Activated CD4-positive, alpha-beta T cell treated with anti-CD3 and anti-CD28 coated beads for 36 hours (primary cell): ENCODE measurements at regions of chr19 and their contacts with region 1.

Region 1: DNA sequence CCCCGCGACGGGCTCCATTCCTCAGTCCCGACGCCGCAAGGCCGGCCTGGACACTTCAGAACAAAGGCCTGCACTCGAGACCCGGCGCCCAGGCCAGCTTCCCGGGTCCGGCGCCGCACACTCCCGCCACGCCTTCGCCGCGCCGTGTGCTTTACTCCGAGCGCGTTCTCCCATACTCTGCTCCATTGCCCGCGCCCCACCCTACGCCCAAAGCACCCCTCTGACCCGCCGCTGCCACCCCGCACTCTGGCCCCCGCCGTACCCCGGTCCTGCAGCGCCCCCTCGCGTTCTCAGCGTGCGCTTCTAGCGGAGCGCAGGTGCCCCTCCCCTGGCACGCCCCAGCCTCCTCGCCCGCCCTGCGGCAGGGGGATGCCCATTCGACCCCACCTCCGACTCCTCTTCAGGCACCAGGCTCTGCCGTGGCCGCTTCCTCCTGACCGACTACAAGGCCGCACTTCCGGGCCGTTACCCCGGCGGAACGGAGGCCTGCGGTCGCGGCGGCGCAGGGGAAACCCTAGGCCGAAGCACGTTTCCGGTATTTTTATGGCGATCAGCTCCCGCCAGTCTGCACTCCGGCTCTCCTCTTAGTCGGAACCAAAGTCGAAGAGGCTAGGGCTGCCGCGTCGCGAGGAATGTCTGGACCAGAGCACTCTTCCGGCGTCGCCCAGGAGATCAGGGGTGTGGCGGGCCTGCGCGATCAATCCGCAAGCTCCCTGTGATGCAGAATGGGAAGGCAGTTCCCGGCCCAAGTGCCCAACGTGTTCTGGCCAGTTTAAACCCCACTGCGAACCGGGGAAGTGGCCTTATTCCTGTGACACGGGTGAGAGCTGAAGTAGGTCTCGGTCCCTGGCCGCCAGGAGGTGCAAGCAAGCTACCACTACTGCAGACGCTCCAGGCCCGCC is at the start of gene ZBTB45:
- DNase-seq: peak; percentile 96
- ATAC-seq: peak; percentile 82
- H3K4me3 Mint-ChIP-seq: peak within 1 kb of the TSS; percentile 82
- H3K27ac Mint-ChIP-seq: peak within 1 kb of the TSS; percentile 94
- H3K4me1 Mint-ChIP-seq: peaks cover 39% of the 10 kb centered on the region
- H3K27me3 Mint-ChIP-seq: no peaks in the 10 kb centered on the region
- total RNA-seq, gene ZBTB45: 10.1 to 11.1 TPM

Region 2: DNA sequence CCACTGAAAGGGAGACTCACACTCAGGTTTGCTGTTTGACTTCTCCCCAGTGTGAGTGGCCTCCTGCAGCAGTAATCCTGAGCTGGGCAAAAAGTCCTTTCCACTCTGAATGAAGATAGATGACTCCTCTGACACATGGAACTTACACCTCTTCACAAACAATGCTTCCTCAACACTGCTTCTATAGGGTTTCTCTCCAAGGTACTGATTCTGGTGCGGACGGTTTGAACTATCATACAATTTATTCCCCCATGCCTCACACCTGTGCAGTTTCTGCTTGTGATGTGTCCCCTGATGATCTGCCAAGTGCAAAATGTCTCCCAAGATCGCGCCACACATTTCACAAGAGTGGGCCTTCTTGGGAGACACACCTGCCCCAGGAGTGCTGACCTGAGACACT is 592.0 kb before region 1 on chr19:
- CTCF ChIA-PET with region 1: no interaction called
- POLR2A ChIA-PET with region 1: no interaction called
- intact Hi-C with region 1: no loop called
- DNase-seq: no peak
- ATAC-seq: no peak
- H3K4me3 Mint-ChIP-seq: no peak overlapping the region
- H3K27ac Mint-ChIP-seq: no peak overlapping the region
- H3K4me1 Mint-ChIP-seq: no peaks in the 10 kb centered on the region
- H3K27me3 Mint-ChIP-seq: no peaks in the 10 kb centered on the region

Region 3: DNA sequence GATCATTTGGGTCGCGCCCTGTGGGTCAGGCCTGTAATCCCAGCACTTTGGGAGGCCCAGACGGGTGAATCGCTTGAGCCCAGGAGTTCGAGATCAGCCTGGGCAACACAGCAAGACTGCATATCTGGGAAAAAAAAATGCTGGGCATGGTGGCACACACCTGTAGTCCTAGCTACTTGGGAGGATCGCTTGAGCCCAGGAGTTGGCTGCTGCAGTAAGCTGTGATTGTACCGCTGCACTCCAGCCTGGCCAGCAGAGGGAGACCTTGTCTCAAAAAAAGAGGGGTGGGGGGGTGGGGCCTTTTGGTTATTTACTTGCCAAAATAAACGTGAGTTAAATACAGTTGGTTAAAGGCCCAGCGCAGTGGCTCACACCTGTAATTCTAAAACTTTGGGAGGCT is 300.7 kb before region 1 on chr19:
- CTCF ChIA-PET with region 1: no interaction called
- POLR2A ChIA-PET with region 1: no interaction called
- intact Hi-C with region 1: loop called in 1 of 2 experiments (anchors 1 kb)
- DNase-seq: peak; percentile 70
- ATAC-seq: peak; percentile 88
- H3K4me3 Mint-ChIP-seq: no peak overlapping the region
- H3K27ac Mint-ChIP-seq: no peak overlapping the region
- H3K4me1 Mint-ChIP-seq: no peaks in the 10 kb centered on the region
- H3K27me3 Mint-ChIP-seq: no peaks in the 10 kb centered on the region

Region 4: DNA sequence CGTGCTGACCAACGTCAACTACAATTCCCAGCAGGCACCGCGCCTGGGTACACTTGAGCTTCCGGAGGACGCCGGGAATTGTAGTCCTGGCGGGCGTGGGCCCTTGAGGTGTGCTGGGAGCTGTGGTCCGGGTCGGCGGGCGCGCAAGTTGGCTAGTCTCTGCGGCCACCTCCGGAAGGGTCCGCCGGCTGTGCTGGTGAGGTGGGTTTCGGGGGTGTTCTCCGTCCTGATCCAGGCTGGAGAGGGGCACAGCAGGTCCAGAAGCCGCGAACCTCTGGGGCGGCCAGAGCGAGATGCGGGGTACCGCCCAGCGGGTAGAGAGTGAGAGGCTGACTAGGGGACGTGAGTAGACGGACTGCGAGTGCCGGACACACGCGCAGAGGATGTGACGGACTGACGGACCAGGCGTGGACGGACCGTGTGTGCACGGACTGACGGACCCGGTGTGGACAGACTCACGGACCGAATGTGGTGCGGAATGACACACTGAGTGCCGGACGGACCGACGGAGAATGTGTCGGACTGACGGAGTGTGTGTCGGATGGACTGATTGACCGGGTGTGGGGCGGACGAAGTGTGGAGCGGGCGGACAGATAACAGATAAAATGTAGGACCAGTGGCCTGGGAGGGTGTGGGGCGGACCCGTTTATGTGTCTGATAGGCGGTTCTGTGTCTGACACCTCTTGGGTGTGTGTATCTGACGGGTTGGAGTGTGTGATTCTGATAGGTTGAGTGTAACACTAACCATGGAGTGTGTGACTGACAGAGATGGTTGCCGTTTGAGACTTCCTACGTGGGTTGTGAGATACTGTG is 192.5 kb before region 1 on chr19 and contains the start of gene ZSCAN22:
- CTCF ChIA-PET with region 1: no interaction called
- POLR2A ChIA-PET with region 1: interaction called, 6 read pairs
- intact Hi-C with region 1: loop called in 1 of 2 experiments (anchors 1 kb)
- DNase-seq: peak; percentile 96
- ATAC-seq: peak; percentile 91
- H3K4me3 Mint-ChIP-seq: no peak within 1 kb of the TSS
- H3K27ac Mint-ChIP-seq: no peak within 1 kb of the TSS
- H3K4me1 Mint-ChIP-seq: peaks cover 4% of the 10 kb centered on the region
- H3K27me3 Mint-ChIP-seq: no peaks in the 10 kb centered on the region
- total RNA-seq, gene ZSCAN22: 3.1 to 3.8 TPM

Region 5: DNA sequence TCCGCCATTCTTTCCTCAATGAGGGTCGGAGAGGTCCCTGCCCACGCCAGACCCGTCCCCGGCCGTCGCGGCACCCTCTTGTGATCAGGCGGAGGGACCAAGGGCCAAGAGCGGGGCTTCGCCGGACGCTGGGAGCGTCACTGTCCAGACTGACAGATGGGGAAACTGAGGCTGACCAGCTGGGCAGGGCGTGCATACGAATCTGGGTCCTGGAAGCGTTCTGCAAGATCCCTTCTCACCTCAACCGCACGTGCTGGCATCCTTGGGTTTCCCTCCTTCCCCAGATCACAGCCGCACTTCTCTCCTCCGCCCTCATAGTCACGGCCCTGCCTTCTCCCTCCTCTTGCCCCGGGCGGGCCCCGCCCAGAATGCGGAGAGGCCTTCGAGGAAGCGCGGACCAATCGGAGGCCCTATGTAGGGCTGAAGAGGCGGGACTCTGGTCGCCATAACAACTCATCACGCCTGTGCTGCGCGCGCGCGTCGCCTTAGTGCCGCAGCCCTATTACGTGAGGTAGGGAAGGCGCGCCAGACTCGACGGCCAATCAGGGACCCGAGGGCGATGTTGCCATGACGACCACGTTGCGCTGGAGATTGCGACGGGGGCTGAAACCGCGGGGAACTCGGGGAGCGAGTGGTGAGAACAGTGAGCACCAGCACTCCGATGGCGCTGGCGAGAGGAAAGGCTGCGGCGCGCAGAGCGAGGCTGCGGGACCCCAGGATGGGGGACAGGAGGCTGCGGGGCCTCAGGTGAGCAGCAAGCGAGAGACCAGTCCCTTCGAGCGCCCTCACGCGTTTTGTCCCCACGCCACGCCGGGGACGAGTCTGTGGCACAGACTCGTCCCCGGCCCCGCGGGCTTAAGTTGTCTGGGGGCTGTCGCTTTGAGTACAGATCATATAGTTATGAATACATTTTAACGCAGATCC is 118.4 kb before region 1 on chr19:
- CTCF ChIA-PET with region 1: interaction called, 3 read pairs
- POLR2A ChIA-PET with region 1: no interaction called
- intact Hi-C with region 1: loop called (anchors 1 to 5 kb)
- DNase-seq: peak; percentile 100
- ATAC-seq: peak; percentile 97
- H3K4me3 Mint-ChIP-seq: peak overlapping the region; percentile 82
- H3K27ac Mint-ChIP-seq: peak overlapping the region; percentile 61
- H3K4me1 Mint-ChIP-seq: peaks cover 14% of the 10 kb centered on the region
- H3K27me3 Mint-ChIP-seq: peaks cover 2% of the 10 kb centered on the region

Region 6: GRCh38 chr19:58475714-58476497 is 43.7 kb before region 1 on chr19 and contains the start of gene ZNF446:
- CTCF ChIA-PET with region 1: interaction called, 4 read pairs
- POLR2A ChIA-PET with region 1: interaction called, 3 read pairs
- intact Hi-C with region 1: loop called (anchors 1 to 5 kb)
- DNase-seq: peak; percentile 98
- ATAC-seq: peak; percentile 92
- H3K4me3 Mint-ChIP-seq: peak within 1 kb of the TSS; percentile 83
- H3K27ac Mint-ChIP-seq: peak within 1 kb of the TSS; percentile 96
- H3K4me1 Mint-ChIP-seq: peaks cover 14% of the 10 kb centered on the region
- H3K27me3 Mint-ChIP-seq: no peaks in the 10 kb centered on the region
- total RNA-seq, gene ZNF446: 4.2 to 4.7 TPM

Region 7: DNA sequence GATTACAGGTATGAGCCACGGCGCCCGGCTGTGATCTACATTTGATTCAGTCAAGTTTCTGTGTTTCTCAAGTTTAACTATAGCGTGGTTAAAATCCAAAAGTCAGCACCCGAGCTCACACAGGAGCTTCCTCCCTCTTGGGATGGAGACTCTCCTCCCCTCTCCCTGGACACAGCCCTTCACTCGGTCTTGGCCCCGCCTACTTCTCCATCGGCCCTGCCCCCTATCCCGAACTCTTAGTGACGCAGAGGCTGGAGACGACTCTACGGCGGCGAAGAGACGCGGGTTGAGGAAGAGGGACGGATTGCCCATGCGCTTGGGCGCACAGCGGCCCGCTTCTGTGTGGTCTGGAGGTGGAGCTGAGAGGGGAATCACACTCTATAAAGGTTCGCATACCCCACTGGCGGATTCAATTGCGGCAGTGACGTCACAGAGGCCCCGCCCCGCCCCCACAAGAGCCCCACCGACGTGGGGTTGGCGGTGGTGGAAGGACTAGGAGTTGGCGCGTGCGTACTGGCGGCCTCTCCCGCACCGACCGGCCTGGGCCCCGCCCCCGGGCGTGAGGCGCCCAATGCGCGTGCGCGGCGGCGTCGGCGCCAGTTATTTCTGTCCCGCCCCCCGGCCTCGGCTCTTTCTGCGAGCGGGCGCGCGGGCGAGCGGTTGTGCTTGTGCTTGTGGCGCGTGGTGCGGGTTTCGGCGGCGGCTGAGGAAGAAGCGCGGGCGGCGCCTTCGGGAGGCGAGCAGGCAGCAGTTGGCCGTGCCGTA is 24.4 kb after region 1 on chr19 and contains the start of gene TRIM28:
- CTCF ChIA-PET with region 1: interaction called, 26 read pairs
- POLR2A ChIA-PET with region 1: interaction called, 18 read pairs
- intact Hi-C with region 1: loop called (anchors 1 kb)
- DNase-seq: peak; percentile 100
- ATAC-seq: peak; percentile 98
- H3K4me3 Mint-ChIP-seq: peak within 1 kb of the TSS; percentile 96
- H3K27ac Mint-ChIP-seq: peak within 1 kb of the TSS; percentile 97
- H3K4me1 Mint-ChIP-seq: peaks cover 34% of the 10 kb centered on the region
- H3K27me3 Mint-ChIP-seq: peaks cover 4% of the 10 kb centered on the region
- total RNA-seq, gene TRIM28: 481 to 758 TPM

Region 8: DNA sequence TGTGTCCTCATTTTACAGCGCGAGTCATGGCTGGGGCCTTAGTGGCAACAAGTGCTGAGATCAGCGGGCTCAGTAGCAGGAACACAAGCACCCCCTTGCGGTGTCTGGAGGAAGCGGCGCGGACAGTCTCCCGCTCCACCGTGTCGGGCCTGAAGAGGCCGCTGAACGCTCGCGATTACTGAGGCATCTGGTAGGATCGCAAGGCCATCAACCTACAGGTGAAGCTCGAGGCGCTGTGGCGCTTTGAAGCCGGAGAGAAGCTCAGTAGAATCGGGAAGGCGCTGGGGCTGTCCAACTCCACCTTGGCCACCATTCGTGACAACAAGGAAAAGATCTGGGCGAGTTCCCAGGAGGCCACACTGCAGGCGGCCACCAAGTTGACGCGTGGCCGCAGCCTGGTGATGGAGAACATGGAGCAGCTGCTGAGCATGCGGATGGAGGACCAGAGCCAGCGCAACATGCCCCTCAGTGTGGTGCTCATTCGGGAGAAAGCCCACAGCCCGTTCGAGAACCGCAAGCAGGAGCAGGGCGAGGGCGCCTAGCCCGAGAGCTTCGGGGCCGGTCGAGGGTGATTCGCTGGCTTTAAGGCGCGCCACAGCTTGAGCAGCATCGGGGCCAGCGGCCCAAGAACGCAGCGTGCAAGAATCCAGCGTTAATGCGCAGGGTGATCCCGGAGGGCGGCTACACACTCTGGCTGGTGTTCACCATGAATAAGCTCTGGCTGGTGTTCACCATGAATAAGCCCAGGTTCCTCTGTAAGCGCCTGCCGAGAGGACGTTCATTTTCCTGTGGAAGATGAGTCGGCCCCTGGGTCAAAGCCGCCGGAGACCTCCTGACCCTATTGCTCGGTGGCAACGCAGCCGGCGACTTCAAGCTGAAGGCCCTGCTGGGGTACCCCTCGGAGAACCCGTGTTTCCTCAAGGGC is 61.9 kb after region 1 on chr19:
- CTCF ChIA-PET with region 1: interaction called, 78 read pairs
- POLR2A ChIA-PET with region 1: interaction called, 5 read pairs
- intact Hi-C with region 1: loop called (anchors 1 kb)
- DNase-seq: peak; percentile 97
- ATAC-seq: peak; percentile 95
- H3K4me3 Mint-ChIP-seq: no peak overlapping the region
- H3K27ac Mint-ChIP-seq: peak overlapping the region; percentile 84
- H3K4me1 Mint-ChIP-seq: peaks cover 33% of the 10 kb centered on the region
- H3K27me3 Mint-ChIP-seq: no peaks in the 10 kb centered on the region